ENCODE measurements at regions of chrX and their contacts with region 1.

Region 1: GRCh38 chrX:132219343-132219768 is at the start of gene RAP2C:
- DNase-seq: peak; percentile 86
- ATAC-seq: peak; percentile 88
- total RNA-seq, gene RAP2C: 17.3 TPM

Region 2: DNA sequence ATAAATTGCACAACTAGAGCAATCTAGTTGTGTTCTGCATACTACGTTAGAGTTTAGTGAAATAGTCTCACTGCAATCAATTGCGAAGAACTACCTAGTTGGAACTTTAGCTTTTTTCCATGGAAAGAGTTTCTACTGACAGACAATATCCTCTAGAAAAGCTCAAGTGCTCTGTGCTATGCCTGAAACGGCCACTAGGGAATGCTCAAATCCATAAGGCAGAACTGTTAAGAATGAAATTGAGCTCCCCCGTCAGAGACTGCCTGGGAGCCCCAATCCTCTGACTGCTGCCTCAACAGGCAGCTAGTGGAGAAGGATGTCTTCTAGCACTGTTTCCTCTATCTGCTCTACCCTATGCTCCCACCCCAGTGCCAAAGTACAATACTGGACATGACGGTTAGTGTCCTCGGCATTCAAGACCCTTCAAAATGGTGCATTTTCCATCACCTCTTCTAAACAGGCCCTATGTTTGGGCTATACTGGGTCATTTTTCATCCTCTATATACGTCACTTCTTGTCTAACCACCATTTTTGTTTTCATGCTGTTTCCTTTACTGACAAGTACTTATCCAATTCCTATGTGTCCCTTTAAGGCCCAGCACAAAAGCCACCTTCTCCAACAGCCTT is 126.8 kb before region 1 on chrX:
- intact Hi-C with region 1: loop called (anchors 5 kb)
- DNase-seq: no peak
- ATAC-seq: no peak

Region 3: DNA sequence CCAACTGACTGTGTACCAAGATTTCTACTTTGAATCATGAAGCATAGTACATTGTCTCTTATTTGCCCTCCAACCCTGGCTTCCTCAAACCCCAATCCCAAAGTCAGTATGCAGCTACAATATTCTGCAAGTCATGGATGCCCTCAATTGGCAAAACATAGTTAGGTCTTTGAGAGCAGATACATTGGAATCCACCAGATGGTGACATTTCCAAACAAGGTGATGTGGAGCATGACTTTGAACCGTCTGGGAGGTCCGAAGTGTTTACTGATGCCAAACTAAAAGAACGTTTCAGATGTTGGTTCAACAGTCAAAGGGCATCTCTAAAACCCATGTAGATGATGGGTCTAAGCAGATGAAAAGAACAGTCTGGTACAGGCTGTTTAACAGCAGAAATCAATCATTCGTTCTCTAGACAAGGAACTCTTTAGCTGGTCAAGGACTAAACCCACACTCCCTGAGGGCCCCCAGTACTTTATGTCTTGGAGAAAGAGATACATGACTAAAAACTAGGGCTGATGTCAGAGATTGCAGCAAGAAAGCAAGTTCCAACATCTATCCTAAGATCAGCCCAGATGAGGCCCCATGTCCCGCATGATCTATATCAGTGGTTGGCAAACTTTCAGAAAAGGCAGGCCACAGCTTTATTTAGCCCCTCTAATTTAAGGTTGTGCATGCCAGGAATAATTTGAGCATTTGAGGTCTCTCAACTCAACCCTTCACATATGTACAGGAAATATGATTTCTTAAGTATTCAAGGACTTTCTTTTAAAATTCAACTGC is 47.7 kb before region 1 on chrX:
- intact Hi-C with region 1: loop called (anchors 2 kb)
- DNase-seq: no peak
- ATAC-seq: no peak

Region 4: DNA sequence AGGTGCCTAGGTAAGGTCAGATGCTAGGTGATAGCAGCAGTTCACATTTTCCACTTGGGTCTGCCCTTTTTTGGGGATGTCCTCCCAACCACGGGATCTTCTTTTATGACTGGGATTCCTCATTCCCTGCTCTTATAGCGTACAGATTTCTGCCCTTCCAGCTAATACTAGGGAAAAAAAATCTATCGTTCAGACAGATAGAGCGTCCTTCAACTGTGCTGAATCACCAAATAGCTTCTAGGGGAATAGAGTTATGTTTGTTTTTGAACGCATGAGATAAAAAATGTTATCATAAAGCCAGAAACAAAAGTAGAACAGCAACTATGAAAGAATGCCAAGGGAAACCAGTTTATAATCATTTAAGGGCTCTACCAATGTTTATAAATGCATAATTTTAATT is 13.1 kb before region 1 on chrX:
- intact Hi-C with region 1: loop called (anchors 2 kb)
- DNase-seq: no peak
- ATAC-seq: no peak

Region 5: GRCh38 chrX:132413459-132413858 is 194.1 kb after region 1 on chrX:
- intact Hi-C with region 1: no loop called
- DNase-seq: no peak
- ATAC-seq: no peak